Gastrocnemius medialis (tissue), 4 donors: ENCODE measurements at regions of chr3 and their contacts with region 1.

Region 1: DNA sequence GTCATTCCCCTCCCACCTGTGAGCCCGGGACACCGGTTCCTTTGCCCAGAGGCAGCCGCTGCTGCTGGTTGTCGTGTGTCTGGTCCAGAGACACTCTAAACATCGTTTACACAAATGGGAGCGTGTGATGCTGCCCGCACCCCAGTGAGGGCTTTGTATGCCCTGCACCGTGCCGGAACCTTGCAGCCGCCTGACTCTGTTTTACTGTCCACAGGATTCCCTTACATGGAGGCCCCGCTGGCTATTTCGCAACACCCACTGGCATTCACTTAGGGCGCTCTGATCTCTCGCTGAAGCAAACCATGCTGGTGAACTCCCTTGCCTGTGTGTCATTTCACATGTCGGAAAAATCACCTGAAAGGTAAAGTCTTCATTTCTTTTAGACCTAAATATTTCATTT is 100.8 kb upstream of the SLC6A6 start:
- DNase-seq: peak; percentile 91 to 98
- ATAC-seq: peak; percentile 73 to 80
- H3K4me3 ChIP-seq: no peak overlapping the region
- H3K27ac ChIP-seq: peak overlapping the region; percentile 80 to 87 (median 83)
- H3K4me1 ChIP-seq: peaks cover 41 to 50% of the 10 kb centered on the region in 2 donors
- H3K27me3 ChIP-seq: no peaks in the 10 kb centered on the region
- CTCF ChIP-seq: no peak
- POLR2A ChIP-seq: peak; percentile 62 to 66

Region 2: GRCh38 chr3:14329116-14329830 is 27.7 kb after region 1 on chr3:
- in situ Hi-C with region 1: no loop called
- intact Hi-C with region 1: loop called (anchors 1 kb)
- DNase-seq: no peak
- ATAC-seq: peak in 1 of 2 donors; percentile 46
- H3K4me3 ChIP-seq: no peak overlapping the region
- H3K27ac ChIP-seq: peak overlapping the region; percentile 44 to 95 (median 79)
- H3K4me1 ChIP-seq: peaks cover 19 to 36% of the 10 kb centered on the region in 2 donors
- H3K27me3 ChIP-seq: no peaks in the 10 kb centered on the region
- CTCF ChIP-seq: no peak
- POLR2A ChIP-seq: no peak

Region 3: GRCh38 chr3:15647611-15648167 is 1346.1 kb after region 1 on chr3:
- in situ Hi-C with region 1: no loop called
- intact Hi-C with region 1: no loop called
- DNase-seq: no peak
- ATAC-seq: no peak
- H3K4me3 ChIP-seq: peak overlapping the region in 1 of 4 donors; percentile 1
- H3K27ac ChIP-seq: peak overlapping the region; percentile 74 to 80 (median 78)
- H3K4me1 ChIP-seq: peaks cover 25 to 29% of the 10 kb centered on the region in 2 donors
- H3K27me3 ChIP-seq: no peaks in the 10 kb centered on the region
- CTCF ChIP-seq: no peak
- POLR2A ChIP-seq: no peak